ENCODE measurements at regions of chr12 and their contacts with region 1.

Region 1: DNA sequence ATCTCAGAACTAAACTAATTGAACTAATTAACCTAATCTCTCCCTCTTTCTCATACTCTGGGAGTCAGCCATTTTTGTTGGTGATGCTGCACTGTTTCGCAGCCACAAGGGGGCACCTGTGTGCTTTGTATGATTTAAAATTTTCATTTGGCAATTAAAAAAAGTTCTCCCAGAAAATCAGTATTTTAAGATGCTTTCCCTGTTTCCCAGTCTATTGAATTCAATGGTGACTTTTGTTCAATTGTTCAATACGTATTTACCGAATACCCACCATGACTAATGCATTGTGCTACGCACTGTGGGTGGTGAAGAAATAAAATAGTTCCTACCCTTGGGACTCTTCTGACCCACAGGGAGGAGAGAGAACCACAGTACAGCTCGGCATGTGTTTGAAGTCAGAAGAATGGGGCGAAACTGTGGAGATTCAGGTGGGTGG is 63.7 kb downstream of the ZNF664 start:
- DNase-seq: no peak
- ATAC-seq: peak; percentile 63 to 70
- H3K4me3 ChIP-seq: no peak overlapping the region
- H3K27ac ChIP-seq: no peak overlapping the region
- H3K4me1 ChIP-seq: no peaks in the 10 kb centered on the region
- H3K27me3 ChIP-seq: no peaks in the 10 kb centered on the region
- CTCF ChIP-seq: peak; percentile 93

Region 2: DNA sequence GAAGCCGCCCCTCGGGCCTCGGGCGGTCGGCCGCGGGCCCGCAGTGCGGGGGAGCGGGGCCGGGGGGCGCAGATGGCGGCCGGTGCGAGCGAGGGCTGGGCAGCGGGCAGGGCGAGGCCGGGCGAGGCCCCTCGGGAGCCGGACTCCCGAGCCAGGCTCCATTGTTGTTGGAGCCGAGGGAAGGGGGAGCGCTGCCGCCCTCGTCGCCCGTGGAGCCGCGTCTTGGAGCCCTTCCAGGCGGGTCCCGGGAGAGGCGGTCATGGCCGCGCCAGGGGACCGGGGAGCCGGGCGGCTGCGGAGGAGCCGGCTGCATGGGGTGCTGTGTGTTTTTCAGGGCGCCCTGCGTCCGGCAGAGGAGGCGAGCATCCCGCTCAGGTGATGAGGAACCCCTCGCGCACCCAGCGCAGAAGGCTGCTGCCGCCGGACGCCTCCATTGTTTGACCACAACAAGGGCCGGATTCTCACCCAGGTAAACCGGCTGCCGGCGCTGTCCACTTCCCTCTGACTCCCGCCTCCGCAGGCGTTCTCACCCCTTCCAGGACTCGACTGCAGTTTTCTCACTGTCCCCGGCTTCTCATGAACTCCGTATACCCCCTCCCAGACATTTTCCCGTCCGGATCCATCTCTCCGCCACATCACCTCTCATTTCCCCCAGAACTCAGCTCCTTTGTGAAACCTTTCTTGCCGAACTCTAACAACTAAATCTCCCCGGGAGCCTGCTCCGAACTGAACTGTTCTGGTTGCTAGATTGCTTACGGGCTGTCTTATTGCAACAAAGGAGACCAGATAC is 62.9 kb before region 1 on chr12:
- intact Hi-C with region 1: no loop called
- DNase-seq: peak; percentile 68
- ATAC-seq: peak in 1 of 2 donors; percentile 6
- H3K4me3 ChIP-seq: peak overlapping the region; percentile 78
- H3K27ac ChIP-seq: peak overlapping the region; percentile 69
- H3K4me1 ChIP-seq: peaks cover 37% of the 10 kb centered on the region
- H3K27me3 ChIP-seq: no peaks in the 10 kb centered on the region
- CTCF ChIP-seq: no peak

Region 3: DNA sequence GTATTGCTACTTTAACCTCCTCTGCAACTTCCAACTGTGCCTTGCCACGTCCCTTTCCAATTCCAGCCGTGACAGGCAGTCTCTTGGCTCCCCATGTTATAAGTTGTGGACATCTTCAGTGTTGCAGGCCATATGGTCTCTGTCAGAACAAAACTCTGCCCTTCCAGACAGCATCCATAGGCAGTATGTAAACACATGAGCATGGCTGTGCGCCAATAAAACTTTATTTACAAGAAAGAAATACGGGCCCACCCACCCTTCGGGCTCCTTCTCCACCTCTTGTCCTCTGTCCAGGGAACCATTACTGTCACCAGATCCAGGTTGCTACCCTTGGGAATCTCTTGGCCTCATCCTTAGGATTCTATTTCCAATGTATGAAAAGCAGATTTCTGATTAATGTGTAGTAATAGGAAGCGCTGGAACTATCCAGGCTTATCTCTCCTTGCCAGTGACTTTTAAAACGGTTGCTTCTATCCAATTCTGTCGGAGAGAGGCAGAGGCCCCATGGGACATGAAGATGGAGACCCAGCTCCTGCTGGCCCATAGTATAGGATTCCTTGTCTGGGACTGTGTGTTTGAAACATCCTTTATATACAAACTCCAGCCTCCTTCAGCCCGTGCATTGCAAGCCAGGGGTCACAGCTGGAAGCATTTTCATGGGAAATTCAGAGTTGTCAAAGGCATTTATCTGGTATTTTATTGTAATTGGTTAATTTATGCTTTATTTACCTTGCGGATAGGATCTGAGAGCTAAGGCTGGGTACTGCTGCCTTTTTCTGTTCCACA is 50.8 kb after region 1 on chr12:
- intact Hi-C with region 1: no loop called
- DNase-seq: no peak
- ATAC-seq: no peak
- H3K4me3 ChIP-seq: no peak overlapping the region
- H3K27ac ChIP-seq: no peak overlapping the region
- H3K4me1 ChIP-seq: no peaks in the 10 kb centered on the region
- H3K27me3 ChIP-seq: no peaks in the 10 kb centered on the region
- CTCF ChIP-seq: no peak

Region 4: DNA sequence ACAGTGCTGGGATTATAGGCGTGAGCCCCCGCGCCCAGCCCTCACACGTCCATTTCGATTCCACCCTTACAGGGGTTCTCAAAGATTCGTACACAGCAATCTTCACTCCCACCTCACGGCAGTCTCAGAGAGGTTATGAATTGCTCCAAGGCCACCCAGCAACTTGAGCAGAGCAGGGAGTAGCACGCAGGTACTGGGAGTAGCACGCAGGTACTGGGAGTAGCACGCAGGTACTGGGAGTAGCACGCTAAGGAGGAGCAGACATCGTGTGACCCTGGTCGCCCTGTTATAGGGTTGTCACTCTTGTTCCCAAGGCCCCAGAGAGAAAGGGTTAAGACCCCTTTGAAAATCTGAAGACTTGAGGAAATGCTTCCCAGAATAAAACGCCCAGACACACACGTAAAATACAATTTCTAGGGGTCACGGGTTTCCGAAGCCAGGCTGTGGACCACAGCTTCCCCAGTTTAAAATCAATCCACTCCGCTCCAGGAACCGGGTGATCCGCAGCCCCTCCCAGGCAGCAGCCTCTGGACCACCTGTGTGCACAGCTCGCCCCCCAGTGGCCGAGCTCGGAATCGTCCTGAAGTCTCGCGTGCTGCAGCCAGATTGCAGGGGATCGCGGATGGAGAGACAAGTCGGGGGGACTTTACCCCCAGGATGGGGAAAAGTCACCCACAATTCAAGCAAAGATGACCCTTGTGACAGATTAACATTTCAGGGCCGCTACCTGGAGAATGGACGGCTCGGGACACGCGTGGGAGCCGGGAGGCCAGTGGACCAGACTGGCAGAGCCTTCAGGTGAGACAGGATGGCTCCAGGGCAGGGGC is 735.0 kb after region 1 on chr12:
- intact Hi-C with region 1: loop called (anchors 10 kb)
- DNase-seq: peak; percentile 89
- ATAC-seq: peak; percentile 79 to 83
- H3K4me3 ChIP-seq: no peak overlapping the region
- H3K27ac ChIP-seq: no peak overlapping the region
- H3K4me1 ChIP-seq: peaks cover 35% of the 10 kb centered on the region
- H3K27me3 ChIP-seq: no peaks in the 10 kb centered on the region
- CTCF ChIP-seq: peak; percentile 96

Measured in lower lobe of right lung (tissue), 2 donors.